CD14-positive monocyte (primary cell): ENCODE measurements at regions of chr14 and their contacts with region 1.

Region 1: GRCh38 chr14:66359500-66359899 is 126.7 kb upstream of the CCDC196 start:
- DNase-seq: peak; percentile 18 to 41 (median 40)
- H3K4me3 ChIP-seq: no peak overlapping the region
- H3K4me3 Mint-ChIP-seq: no peak overlapping the region
- H3K27ac ChIP-seq: no peak overlapping the region
- H3K27ac Mint-ChIP-seq: no peak overlapping the region
- H3K4me1 ChIP-seq: no peaks in the 10 kb centered on the region
- H3K4me1 Mint-ChIP-seq: no peaks in the 10 kb centered on the region
- H3K27me3 ChIP-seq: no peaks in the 10 kb centered on the region
- H3K27me3 Mint-ChIP-seq: peaks cover 2 to 4% (median 3%) of the 10 kb centered on the region in 3 donors
- CTCF ChIP-seq: peak; percentile 74

Region 2: GRCh38 chr14:67111022-67111421 is 751.5 kb after region 1 on chr14:
- intact Hi-C with region 1: loop called in 1 of 2 experiments (anchors 10 kb)
- DNase-seq: no peak
- H3K4me3 ChIP-seq: no peak overlapping the region
- H3K4me3 Mint-ChIP-seq: no peak overlapping the region
- H3K27ac ChIP-seq: no peak overlapping the region
- H3K27ac Mint-ChIP-seq: no peak overlapping the region
- H3K4me1 ChIP-seq: no peaks in the 10 kb centered on the region
- H3K4me1 Mint-ChIP-seq: no peaks in the 10 kb centered on the region
- H3K27me3 ChIP-seq: no peaks in the 10 kb centered on the region
- H3K27me3 Mint-ChIP-seq: peaks cover 0 to 1% (median 0%) of the 10 kb centered on the region in 3 donors
- CTCF ChIP-seq: no peak

Region 3: DNA sequence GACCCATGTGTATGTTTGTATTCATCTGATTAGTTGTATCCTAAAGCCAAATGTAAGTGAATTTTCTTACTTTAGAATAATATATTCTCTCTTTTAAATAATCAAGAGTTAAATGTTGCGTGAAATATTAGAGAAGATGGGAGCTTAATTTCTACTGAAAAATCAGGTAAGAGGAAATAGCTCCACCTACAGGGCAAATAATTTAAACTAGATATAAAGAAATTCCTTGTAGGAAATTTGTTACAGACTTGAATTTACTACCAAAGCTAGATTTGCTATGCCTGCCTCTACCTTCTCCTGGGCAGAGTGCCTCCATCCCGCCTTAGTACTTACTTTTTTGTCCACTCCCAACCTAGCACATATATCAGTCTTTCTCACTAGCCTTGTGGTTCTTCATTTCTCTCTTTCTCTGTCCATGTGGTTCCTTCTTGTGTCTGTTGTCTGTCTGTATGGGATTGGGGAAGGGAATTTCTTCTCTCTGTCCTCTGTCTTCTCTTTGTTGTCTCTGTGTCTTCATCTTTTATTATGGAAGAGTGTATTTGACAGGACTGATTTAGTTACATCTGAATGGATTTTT is 926.5 kb after region 1 on chr14:
- intact Hi-C with region 1: loop called in 1 of 2 experiments (anchors 10 kb)
- DNase-seq: peak in 2 of 3 donors; percentile 7 to 38
- H3K4me3 ChIP-seq: no peak overlapping the region
- H3K4me3 Mint-ChIP-seq: no peak overlapping the region
- H3K27ac ChIP-seq: no peak overlapping the region
- H3K27ac Mint-ChIP-seq: no peak overlapping the region
- H3K4me1 ChIP-seq: no peaks in the 10 kb centered on the region
- H3K4me1 Mint-ChIP-seq: no peaks in the 10 kb centered on the region
- H3K27me3 ChIP-seq: no peaks in the 10 kb centered on the region
- H3K27me3 Mint-ChIP-seq: peaks cover 0 to 2% (median 0%) of the 10 kb centered on the region in 3 donors
- CTCF ChIP-seq: peak; percentile 76